ENCODE measurements at regions of chr19 and their contacts with region 1.

Region 1: GRCh38 chr19:11380653-11381534 is 3.2 kb downstream of the EPOR start:
- DNase-seq: peak; percentile 91
- ATAC-seq: peak; percentile 85
- H3K4me3 Mint-ChIP-seq: peak overlapping the region; percentile 92
- H3K27ac Mint-ChIP-seq: peak overlapping the region; percentile 100
- H3K4me1 Mint-ChIP-seq: peaks cover 48% of the 10 kb centered on the region
- H3K27me3 Mint-ChIP-seq: no peaks in the 10 kb centered on the region
- CTCF ChIP-seq: no peak

Region 2: DNA sequence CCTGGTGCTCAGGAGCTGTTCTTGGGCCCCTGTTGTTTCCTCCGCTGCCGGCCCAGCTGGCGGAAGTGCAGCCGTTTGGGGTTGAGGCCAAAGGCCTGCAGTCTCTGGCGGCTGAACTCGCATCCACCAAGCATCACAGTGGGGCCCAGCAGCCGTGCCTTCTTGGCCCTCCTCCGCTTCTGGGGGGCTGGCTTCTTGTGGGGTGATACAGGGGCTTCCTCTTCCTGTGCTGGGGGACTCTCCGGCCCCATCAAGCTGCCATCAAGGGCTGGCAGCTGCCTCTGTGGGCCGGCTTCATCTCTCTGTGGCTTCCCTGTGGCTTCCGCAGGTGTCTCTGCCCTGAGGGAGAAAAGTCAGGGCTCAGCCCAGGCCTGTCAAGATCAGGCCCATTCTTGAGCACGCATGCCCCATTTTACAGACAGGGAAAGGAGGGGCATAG is 826.9 kb before region 1 on chr19:
- CTCF ChIA-PET with region 1: no interaction called
- POLR2A ChIA-PET with region 1: no interaction called
- intact Hi-C with region 1: no loop called
- DNase-seq: peak; percentile 44
- ATAC-seq: peak; percentile 76
- H3K4me3 Mint-ChIP-seq: peak overlapping the region; percentile 53
- H3K27ac Mint-ChIP-seq: peak overlapping the region; percentile 92
- H3K4me1 Mint-ChIP-seq: peaks cover 38% of the 10 kb centered on the region
- H3K27me3 Mint-ChIP-seq: no peaks in the 10 kb centered on the region
- CTCF ChIP-seq: no peak

Region 3: DNA sequence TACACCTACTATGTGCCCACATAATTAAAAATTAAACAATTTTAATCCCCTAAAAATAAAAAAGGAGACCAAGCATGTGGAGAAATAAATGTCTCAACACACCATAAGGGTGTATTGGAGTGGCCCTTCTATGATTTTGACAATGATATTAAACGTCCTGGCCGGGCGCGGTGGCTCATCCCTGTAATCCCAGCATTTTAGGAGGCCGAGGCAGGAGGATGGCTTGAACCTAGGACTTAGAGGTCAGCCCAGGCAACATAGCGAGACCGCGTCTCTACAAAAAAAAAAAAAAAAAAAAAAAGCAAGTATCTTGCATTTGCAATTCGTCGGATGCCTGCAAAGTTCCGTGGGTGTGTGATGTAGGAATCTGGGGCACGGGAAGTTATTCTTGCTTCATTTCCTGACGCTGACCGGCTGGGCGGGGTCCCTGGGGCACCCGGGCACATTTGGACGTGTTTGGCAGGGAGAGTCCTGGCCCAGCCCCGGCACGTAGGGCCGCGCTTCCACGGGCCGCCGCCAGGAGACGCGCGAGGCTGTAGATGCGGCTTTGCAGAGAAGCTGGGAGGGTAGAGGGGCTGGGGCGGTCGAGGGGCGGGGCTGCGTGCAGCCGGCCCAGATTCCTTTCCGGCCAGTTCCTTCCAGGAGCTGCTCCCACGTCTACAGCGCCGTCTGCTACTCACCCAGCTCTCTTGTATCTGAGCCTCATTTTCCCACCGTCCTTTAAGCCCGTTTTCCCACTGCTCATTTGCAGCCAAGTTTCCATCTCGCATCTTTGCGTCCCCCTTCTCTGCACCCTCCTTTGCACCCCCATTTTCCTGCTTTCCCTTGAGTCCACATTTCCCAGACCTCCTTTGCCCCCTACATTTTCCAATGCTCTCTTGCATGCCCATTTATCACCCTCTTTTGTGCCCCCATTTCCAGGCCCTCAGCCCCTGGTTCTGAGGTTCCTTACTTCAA is 87.2 kb before region 1 on chr19:
- CTCF ChIA-PET with region 1: interaction called, 8 read pairs
- POLR2A ChIA-PET with region 1: interaction called, 3 read pairs
- intact Hi-C with region 1: loop called (anchors 1 kb)
- DNase-seq: peak; percentile 84
- ATAC-seq: peak; percentile 100
- H3K4me3 Mint-ChIP-seq: no peak overlapping the region
- H3K27ac Mint-ChIP-seq: no peak overlapping the region
- H3K4me1 Mint-ChIP-seq: peaks cover 6% of the 10 kb centered on the region
- H3K27me3 Mint-ChIP-seq: peaks cover 5% of the 10 kb centered on the region
- CTCF ChIP-seq: peak; percentile 80

Region 4: DNA sequence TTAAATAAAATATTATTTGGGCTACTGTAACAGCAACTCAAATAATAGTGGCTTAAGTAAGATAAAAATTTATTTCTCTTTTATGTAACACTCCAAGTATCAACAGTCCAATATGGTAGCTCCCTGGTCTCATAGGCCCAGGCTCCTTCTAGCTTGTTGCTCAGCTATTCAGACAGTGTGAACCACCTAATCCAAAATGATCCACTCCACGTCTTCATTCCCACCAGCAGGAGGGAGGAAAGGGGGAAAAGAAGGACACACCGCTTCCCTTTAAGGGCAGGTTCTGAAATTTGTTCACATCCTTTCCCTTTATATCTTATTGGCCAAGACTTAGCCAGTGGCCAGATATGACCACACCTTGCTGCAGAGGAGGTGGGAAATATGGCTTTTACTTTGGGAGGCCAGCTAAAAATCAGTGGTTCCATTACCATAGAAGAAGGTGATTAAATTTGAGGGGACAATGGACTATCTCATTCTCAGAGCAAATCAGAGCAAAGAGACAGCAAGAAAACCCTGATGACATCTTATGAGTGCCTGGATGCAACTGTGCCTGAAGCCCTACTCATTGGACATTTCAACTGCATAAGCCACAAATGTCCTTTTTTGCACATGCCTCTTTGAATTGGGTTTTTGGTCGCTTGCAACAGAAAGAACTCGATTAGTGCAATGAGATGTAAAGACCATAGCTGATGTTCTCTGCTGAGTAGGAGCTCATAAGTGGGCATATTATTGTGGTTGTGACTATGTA is 10.2 kb after region 1 on chr19:
- CTCF ChIA-PET with region 1: interaction called, 10 read pairs
- POLR2A ChIA-PET with region 1: interaction called, 6 read pairs
- intact Hi-C with region 1: no loop called
- DNase-seq: no peak
- ATAC-seq: no peak
- H3K4me3 Mint-ChIP-seq: no peak overlapping the region
- H3K27ac Mint-ChIP-seq: no peak overlapping the region
- H3K4me1 Mint-ChIP-seq: peaks cover 21% of the 10 kb centered on the region
- H3K27me3 Mint-ChIP-seq: peaks cover 3% of the 10 kb centered on the region
- CTCF ChIP-seq: no peak

Region 5: GRCh38 chr19:11422163-11423021 is 41.5 kb after region 1 on chr19:
- CTCF ChIA-PET with region 1: interaction called, 10 read pairs
- POLR2A ChIA-PET with region 1: interaction called, 60 read pairs
- intact Hi-C with region 1: loop called (anchors 1 kb)
- DNase-seq: peak; percentile 89
- ATAC-seq: peak; percentile 84
- H3K4me3 Mint-ChIP-seq: peak overlapping the region; percentile 81
- H3K27ac Mint-ChIP-seq: peak overlapping the region; percentile 66
- H3K4me1 Mint-ChIP-seq: peaks cover 54% of the 10 kb centered on the region
- H3K27me3 Mint-ChIP-seq: peaks cover 18% of the 10 kb centered on the region
- CTCF ChIP-seq: no peak

Region 6: DNA sequence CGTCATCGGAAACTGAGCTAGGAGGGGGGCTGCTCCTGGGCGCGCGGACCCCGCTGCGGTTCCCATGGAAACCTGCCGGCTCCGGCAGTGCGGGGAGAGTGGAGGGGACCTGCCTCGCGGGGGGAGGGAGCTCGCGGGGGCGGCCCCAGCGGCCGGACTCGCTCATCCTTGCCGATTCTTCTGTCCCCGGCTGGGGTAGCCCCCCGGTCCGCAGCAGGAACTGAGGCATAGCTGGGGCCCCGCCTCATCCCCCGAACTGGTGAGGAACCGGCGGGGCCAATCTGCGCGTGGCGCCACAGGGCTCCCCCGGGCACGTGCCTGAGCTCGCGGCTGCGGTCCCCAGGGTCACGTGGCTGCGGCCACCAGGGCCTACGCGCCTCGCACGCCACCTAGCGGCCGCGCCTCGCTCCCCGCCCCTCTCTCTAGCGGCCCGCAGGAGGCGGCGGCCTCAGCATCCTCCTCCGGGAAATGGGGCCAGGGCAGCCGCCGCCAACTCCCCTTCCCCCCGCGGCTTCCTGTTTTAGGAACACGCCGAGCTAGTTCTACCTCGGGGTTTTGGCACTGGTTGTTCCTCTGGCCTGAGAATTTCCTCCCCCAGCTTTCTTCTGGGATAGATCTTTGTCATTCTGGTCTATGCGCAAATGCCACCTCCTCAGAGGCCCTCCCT is 101.6 kb after region 1 on chr19:
- CTCF ChIA-PET with region 1: interaction called, 27 read pairs
- POLR2A ChIA-PET with region 1: interaction called, 13 read pairs
- intact Hi-C with region 1: loop called (anchors 1 kb)
- DNase-seq: peak; percentile 85
- ATAC-seq: peak; percentile 72
- H3K4me3 Mint-ChIP-seq: peak overlapping the region; percentile 74
- H3K27ac Mint-ChIP-seq: peak overlapping the region; percentile 41
- H3K4me1 Mint-ChIP-seq: peaks cover 30% of the 10 kb centered on the region
- H3K27me3 Mint-ChIP-seq: peaks cover 23% of the 10 kb centered on the region
- CTCF ChIP-seq: no peak

Region 7: DNA sequence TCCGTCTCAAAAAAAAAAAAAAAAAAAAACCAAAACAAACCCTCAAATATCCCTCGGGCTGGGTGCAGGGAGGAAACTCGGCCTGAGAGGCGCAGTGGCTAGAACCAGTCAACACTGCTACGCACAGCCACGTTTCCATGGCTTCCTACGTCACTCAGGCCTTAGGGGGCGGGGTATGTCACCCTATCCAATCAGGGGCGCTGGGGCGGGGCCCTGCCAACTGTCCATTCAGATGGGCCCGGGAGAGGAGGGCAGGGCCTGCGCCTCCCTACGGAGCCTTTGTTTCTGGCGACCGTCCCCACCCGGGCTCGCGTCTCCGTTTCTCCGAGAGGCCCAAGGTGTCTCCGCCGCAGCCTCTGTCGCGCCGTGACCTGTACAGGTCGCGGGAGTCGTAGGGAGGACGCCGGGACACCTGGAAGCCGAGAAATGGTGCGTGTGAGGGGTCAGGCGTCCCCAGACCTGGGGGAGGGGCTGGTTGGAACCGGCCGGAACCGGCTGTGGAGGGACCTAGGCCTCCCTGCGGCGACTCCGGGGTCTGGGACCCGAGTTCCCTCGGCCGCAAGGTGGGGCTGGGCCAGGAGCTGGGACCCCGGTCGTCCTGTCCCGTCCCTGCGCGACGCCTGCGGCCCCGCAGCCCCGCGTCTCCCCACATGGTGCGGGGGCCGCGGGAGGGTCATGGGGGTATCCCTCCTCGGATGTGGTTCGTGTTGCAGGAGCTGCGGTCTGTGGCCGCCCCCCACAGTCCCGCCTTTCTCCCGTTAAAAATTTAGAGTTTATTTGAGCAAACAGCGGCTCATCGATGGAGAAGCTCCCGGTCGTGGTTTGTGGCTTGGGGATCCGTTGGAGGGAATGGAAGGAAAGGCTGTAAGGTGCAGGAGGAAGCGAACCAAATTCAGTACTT is 216.6 kb after region 1 on chr19 and contains the start of gene ZNF627:
- CTCF ChIA-PET with region 1: no interaction called
- POLR2A ChIA-PET with region 1: no interaction called
- intact Hi-C with region 1: loop called (anchors 2 kb)
- DNase-seq: peak; percentile 91
- ATAC-seq: peak; percentile 99
- H3K4me3 Mint-ChIP-seq: peak within 1 kb of the TSS; percentile 88
- H3K27ac Mint-ChIP-seq: peak within 1 kb of the TSS; percentile 87
- H3K4me1 Mint-ChIP-seq: peaks cover 47% of the 10 kb centered on the region
- H3K27me3 Mint-ChIP-seq: no peaks in the 10 kb centered on the region
- CTCF ChIP-seq: no peak
- total RNA-seq, gene ZNF627: 17.0 and 17.6 TPM in 2 replicates

Measured in activated B cell treated with CpG ODN at 0.5 μM for 24 hours (primary cell).